IMR-90 (cell line): ENCODE measurements at regions of chr7 and their contacts with region 1.

Region 1: GRCh38 chr7:18144166-18144565 is 116.5 kb upstream of the PRPS1L1 start:
- DNase-seq: no peak
- ATAC-seq: no peak
- H3K4me3 ChIP-seq: no peak overlapping the region
- H3K27ac ChIP-seq: no peak overlapping the region
- H3K4me1 ChIP-seq: no peaks in the 10 kb centered on the region
- H3K27me3 ChIP-seq: peaks cover 2% of the 10 kb centered on the region; the same call in 1 of the 2 replicates
- CTCF ChIP-seq: no peak
- POLR2A ChIP-seq: no peak
- RAD21 ChIP-seq: no peak

Region 2: DNA sequence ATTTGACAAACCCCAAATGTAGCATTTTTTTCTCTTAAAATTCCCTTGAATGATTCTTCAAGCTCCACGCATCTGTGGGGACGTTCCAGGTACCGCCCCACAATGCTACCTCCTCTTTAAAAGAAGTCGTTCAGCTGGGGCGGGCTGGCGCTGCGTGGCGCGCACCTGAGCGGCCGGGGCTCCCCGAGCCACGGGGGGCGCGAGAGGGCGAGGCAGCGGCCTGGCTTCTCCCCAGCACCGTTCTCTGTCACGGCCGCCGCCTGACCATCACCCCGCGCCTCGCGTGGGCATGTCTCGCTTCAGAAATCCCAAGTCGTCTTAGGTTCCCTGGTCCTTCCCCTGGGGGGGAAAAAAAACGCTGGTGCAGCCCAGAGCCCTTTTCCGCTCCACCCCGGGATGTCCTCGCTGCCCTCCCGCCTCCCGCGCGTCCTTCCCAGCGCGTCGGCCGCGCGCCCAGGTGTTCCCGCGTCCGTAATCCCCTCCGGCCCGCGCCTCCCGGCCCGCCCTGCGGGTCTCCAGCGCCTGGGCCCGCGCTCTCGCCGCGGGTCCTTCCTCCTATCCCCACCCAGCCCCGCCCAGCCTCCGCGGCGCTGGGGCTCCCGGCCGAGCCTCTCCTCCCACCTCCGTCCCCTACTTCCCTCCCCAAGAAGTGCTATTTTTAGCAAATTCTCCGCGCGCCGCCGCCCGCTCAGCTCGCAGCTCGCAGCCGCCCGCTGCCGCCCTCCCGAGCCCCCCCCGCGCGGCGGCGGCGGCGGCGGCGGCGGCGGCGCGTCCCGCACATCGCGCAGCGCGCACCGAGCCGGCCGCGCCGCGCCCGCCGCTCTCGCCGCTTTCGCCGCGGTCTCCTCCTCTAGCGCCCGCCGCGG is 57.8 kb before region 1 on chr7:
- CTCF ChIA-PET with region 1: interaction called, 11 read pairs
- POLR2A ChIA-PET with region 1: no interaction called
- dilution Hi-C with region 1: no loop called
- in situ Hi-C with region 1: no loop called
- intact Hi-C with region 1: no loop called
- DNase-seq: no peak
- ATAC-seq: peak; percentile 61
- H3K4me3 ChIP-seq: peak overlapping the region; percentile 63
- H3K27ac ChIP-seq: no peak overlapping the region
- H3K4me1 ChIP-seq: no peaks in the 10 kb centered on the region
- H3K27me3 ChIP-seq: peaks cover 25% of the 10 kb centered on the region
- CTCF ChIP-seq: no peak
- POLR2A ChIP-seq: no peak
- RAD21 ChIP-seq: no peak